GM12878 (cell line): ENCODE measurements at regions of chr1 and their contacts with region 1.

Region 1: DNA sequence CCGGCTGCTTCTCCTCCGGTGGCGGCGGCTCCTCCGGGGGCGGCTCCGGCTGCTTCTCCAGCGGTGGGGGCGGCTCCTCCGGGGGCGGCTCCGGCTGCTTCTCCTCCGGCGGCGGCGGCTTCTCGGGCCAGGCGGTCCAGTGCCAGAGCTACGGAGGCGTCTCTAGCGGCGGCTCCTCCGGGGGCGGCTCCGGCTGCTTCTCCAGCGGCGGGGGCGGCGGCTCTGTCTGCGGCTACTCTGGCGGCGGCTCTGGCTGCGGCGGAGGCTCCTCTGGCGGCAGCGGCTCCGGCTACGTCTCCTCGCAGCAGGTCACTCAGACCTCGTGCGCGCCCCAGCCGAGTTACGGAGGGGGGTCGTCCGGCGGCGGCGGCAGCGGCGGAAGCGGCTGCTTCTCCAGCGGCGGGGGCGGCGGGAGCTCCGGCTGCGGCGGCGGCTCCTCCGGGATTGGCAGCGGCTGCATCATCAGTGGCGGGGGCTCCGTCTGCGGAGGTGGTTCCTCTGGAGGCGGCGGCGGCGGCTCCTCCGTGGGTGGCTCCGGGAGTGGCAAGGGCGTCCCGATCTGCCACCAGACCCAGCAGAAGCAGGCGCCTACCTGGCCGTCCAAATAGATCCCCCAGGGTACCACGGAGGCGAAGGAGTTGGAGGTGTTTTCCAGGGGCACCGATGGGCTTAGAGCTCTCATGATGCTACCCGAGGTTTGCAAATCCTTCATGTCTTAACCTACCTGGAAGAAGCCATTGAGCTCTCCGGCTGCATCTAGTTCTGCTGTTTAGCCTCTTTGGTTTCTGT is 2.0 kb downstream of the LORICRIN start:
- DNase-seq: no peak
- ATAC-seq: peak; percentile 26
- H3K4me3 ChIP-seq: peak overlapping the region; percentile 50; the same call in 1 of the 2 replicates
- H3K27ac ChIP-seq: no peak overlapping the region
- H3K4me1 ChIP-seq: peaks cover 15% of the 10 kb centered on the region
- H3K27me3 ChIP-seq: 0 out of 4 replicates have a peak, but pooled peaks cover 0 to 4% of the 10 kb centered on the region in 2 experiments
- CTCF ChIP-seq: no peak
- EP300 ChIP-seq: no peak
- POLR2A ChIP-seq: no peak
- RAD21 ChIP-seq: no peak

Region 2: GRCh38 chr1:153272186-153272585 is 10.7 kb after region 1 on chr1:
- CTCF ChIA-PET with region 1: interaction called, 8 read pairs
- POLR2A ChIA-PET with region 1: interaction called, 7 read pairs
- RAD21 ChIA-PET with region 1: interaction called, 14 read pairs
- SMC1A ChIA-PET with region 1: interaction called, 16 read pairs
- in situ Hi-C with region 1: no loop called
- intact Hi-C with region 1: no loop called
- DNase-seq: no peak
- ATAC-seq: no peak
- H3K4me3 ChIP-seq: no peak overlapping the region
- H3K27ac ChIP-seq: no peak overlapping the region
- H3K4me1 ChIP-seq: peaks cover 3% of the 10 kb centered on the region
- H3K27me3 ChIP-seq: no peaks in the 10 kb centered on the region
- CTCF ChIP-seq: no peak
- EP300 ChIP-seq: no peak
- POLR2A ChIP-seq: no peak
- RAD21 ChIP-seq: no peak

Region 3: DNA sequence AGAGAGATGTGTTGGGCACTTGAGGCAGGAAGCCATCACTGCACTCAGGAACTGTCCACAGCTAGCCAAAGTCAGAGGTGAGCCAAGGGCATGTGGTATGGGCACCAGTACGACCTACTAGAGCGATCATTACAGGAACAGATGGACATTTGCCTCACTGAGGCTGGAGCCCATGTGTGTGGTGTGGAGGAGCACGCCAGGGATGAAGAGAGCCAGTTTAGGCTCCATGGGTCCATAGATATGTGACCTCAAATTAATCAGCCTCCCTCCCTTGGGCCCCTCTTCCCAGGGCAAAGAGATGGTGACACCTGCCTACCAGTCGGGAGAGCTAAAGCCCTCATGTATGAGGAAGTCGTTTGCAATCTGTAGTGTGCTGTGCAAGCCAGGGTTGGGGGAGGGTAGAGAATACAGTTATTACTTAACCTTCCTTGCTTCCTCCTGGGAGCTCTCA is 83.1 kb after region 1 on chr1:
- CTCF ChIA-PET with region 1: interaction called, 6 read pairs
- POLR2A ChIA-PET with region 1: interaction called, 5 read pairs
- RAD21 ChIA-PET with region 1: interaction called, 14 read pairs
- SMC1A ChIA-PET with region 1: interaction called, 8 read pairs
- in situ Hi-C with region 1: no loop called
- intact Hi-C with region 1: loop called (anchors 5 kb)
- DNase-seq: no peak
- ATAC-seq: peak; percentile 24
- H3K4me3 ChIP-seq: no peak overlapping the region; the same call in 1 of the 2 replicates
- H3K27ac ChIP-seq: peak overlapping the region; percentile 86
- H3K4me1 ChIP-seq: peaks cover 33% of the 10 kb centered on the region
- H3K27me3 ChIP-seq: no peaks in the 10 kb centered on the region
- CTCF ChIP-seq: no peak
- EP300 ChIP-seq: peak in 1 of 2 experiments; percentile 23; a peak in 1 of 4 replicates
- POLR2A ChIP-seq: no peak; the same call in 1 of the 2 replicates
- RAD21 ChIP-seq: no peak